Naive thymus-derived CD4-positive, alpha-beta T cell (primary cell): ENCODE measurements at regions of chr6 and their contacts with region 1.

Region 1: DNA sequence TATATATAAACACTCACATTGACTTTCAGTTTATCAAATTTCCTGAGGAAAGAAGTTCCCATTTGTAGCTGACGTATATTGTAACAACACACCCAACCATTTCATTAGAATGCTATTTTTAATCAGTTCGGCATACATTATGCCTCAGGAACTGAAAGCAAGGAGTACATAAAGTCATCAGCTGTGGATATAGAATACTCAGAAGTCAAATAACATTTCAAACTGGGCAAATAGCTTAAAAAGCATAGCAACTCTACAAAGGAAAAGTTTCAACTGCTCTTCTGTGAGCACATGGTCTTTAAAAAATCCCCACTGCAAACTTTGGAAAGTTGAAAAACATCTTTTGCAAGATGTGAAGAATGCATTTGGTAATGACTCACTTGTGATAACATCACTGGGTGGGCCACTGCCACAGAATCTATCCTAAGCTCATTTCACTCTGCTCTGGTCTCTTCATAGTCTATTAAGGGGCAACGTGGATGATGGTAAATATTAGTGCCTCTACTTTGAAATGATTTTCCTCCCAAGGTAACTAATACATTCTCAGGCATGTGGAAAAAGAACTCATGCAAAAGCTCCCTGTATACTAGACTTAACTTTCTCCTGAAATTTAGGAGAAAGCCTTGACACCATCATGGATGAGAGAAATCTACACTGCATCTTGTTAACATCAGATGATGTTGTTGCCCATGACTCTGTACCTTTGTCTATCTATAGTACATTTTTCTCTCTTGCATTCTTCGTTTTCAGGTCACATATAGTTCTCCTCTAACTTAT is 49.2 kb downstream of the FYN start:
- DNase-seq: peak in 1 of 9 donors; percentile 61
- ATAC-seq: peak; percentile 75
- H3K4me3 ChIP-seq: no peak overlapping the region
- H3K4me3 Mint-ChIP-seq: peak overlapping the region in 9 of 10 donors; percentile 2 to 64 (median 43)
- H3K27ac ChIP-seq: peak overlapping the region; percentile 56
- H3K27ac Mint-ChIP-seq: peak overlapping the region; percentile 5 to 92 (median 78)
- H3K4me1 ChIP-seq: peaks cover 39 to 56% of the 10 kb centered on the region in 2 donors
- H3K4me1 Mint-ChIP-seq: peaks cover 51 to 91% (median 86%) of the 10 kb centered on the region in 7 donors
- H3K27me3 ChIP-seq: no peaks in the 10 kb centered on the region
- H3K27me3 Mint-ChIP-seq: no peaks in the 10 kb centered on the region

Region 2: GRCh38 chr6:111812060-111813038 is 11.7 kb before region 1 on chr6:
- CTCF ChIA-PET with region 1: no interaction called
- POLR2A ChIA-PET with region 1: interaction called, 6 read pairs
- intact Hi-C with region 1: loop called (anchors 1 to 2 kb)
- DNase-seq: peak in 2 of 9 donors; percentile 21 to 23
- ATAC-seq: peak; percentile 38
- H3K4me3 ChIP-seq: no peak overlapping the region
- H3K4me3 Mint-ChIP-seq: peak overlapping the region; percentile 8 to 81 (median 70)
- H3K27ac ChIP-seq: peak overlapping the region; percentile 66
- H3K27ac Mint-ChIP-seq: peak overlapping the region; percentile 83 to 97 (median 88)
- H3K4me1 ChIP-seq: peaks cover 72% of the 10 kb centered on the region in 2 donors
- H3K4me1 Mint-ChIP-seq: peaks cover 47 to 91% (median 86%) of the 10 kb centered on the region in 7 donors
- H3K27me3 ChIP-seq: no peaks in the 10 kb centered on the region
- H3K27me3 Mint-ChIP-seq: no peaks in the 10 kb centered on the region